Activated T-helper 2 cell treated with anti-CD3 and anti-CD28 coated beads, Interferon-gamma antibody, Interleukin-2, Interleukin-4, amounts not matched to agents 10 μg/mL and 5 μg/mL and 100 μg/mL, durations not matched to agents 14 hours and 24 hours and 36 hours (primary cell): ENCODE measurements at regions of chr11 and their contacts with region 1.

Region 1: GRCh38 chr11:35144136-35144741 is 5.3 kb downstream of the CD44 start:
- DNase-seq: peak; percentile 62
- H3K4me3 Mint-ChIP-seq: peak overlapping the region; percentile 58
- H3K27ac Mint-ChIP-seq: peak overlapping the region; percentile 95
- H3K4me1 Mint-ChIP-seq: peaks cover 69% of the 10 kb centered on the region
- H3K27me3 Mint-ChIP-seq: no peaks in the 10 kb centered on the region

Region 2: GRCh38 chr11:34243726-34244464 is 900.3 kb before region 1 on chr11:
- intact Hi-C with region 1: loop called (anchors 10 kb)
- DNase-seq: peak; percentile 52
- H3K4me3 Mint-ChIP-seq: peak overlapping the region; percentile 45
- H3K27ac Mint-ChIP-seq: peak overlapping the region; percentile 83
- H3K4me1 Mint-ChIP-seq: peaks cover 87% of the 10 kb centered on the region
- H3K27me3 Mint-ChIP-seq: no peaks in the 10 kb centered on the region

Region 3: DNA sequence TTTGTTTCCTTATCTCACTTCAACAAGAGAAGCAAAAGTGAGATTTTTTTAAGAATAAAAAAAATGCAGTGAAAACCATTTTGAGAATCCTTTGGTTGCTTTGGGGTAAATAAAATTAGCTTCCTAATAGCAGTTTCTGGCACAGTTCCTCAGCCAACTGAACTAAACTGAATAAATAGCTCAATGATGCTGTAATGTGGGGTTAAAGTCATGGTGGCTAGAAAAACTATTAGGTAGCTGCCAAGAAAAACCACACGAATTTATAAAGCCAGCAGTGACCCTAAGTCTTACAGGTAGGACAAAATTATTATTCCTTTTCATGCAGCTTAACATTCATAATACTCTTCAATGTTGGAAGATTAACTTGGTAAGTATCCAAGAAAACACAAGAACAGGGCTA is 370.4 kb before region 1 on chr11:
- intact Hi-C with region 1: no loop called
- DNase-seq: no peak
- H3K4me3 Mint-ChIP-seq: no peak overlapping the region
- H3K27ac Mint-ChIP-seq: no peak overlapping the region
- H3K4me1 Mint-ChIP-seq: no peaks in the 10 kb centered on the region
- H3K27me3 Mint-ChIP-seq: peaks cover 11% of the 10 kb centered on the region

Region 4: GRCh38 chr11:34997952-34998528 is 146.2 kb before region 1 on chr11:
- intact Hi-C with region 1: no loop called
- DNase-seq: no peak
- H3K4me3 Mint-ChIP-seq: peak overlapping the region; percentile 10
- H3K27ac Mint-ChIP-seq: no peak overlapping the region
- H3K4me1 Mint-ChIP-seq: peaks cover 22% of the 10 kb centered on the region
- H3K27me3 Mint-ChIP-seq: peaks cover 2% of the 10 kb centered on the region

Region 5: GRCh38 chr11:35040221-35040942 is 103.9 kb before region 1 on chr11:
- intact Hi-C with region 1: loop called (anchors 1 kb)
- DNase-seq: peak; percentile 69
- H3K4me3 Mint-ChIP-seq: peak overlapping the region; percentile 73
- H3K27ac Mint-ChIP-seq: peak overlapping the region; percentile 91
- H3K4me1 Mint-ChIP-seq: peaks cover 58% of the 10 kb centered on the region
- H3K27me3 Mint-ChIP-seq: peaks cover 20% of the 10 kb centered on the region

Region 6: GRCh38 chr11:35126000-35126878 is 18.0 kb before region 1 on chr11:
- intact Hi-C with region 1: loop called (anchors 1 kb)
- DNase-seq: no peak
- H3K4me3 Mint-ChIP-seq: peak overlapping the region; percentile 57
- H3K27ac Mint-ChIP-seq: peak overlapping the region; percentile 79
- H3K4me1 Mint-ChIP-seq: peaks cover 56% of the 10 kb centered on the region
- H3K27me3 Mint-ChIP-seq: peaks cover 7% of the 10 kb centered on the region

Region 7: DNA sequence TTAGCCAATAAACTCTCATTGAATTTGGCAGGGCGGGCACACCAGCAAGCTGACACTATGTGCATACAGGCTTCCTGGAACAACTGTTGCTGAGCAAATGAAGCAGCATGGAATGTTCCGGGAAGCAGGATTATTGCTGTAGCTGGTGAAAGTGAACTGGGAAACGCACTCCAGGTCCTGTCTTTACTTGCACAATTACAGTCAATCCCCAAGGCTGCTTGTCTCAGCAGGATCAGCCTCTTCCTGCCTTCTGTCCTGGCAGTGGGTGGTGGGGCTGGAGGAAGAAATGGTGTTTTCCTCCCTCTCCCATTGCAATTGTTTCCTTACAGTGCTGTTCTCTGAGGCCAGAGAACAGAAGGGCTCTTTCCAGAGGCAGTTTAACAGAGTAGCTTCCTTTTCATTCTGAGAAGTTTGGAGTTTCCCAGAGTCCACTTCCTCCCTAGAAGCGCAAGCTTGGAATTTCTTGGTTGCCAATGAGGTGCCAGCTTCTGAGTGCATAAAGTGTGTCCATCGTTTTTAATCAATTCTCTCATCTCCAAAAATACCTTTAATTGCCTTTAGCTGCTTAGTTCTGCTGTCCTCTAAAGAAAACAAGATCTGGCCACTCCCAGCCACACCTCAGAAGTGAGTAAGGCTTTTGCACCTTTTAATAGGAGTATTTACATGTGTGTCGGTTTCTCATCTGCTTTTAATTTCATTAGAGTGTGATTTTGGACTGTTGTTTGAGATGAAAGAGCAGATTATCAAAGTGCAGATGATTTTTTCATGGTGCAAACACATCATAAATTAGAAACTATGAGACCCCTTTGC is 14.7 kb after region 1 on chr11:
- intact Hi-C with region 1: no loop called
- DNase-seq: no peak
- H3K4me3 Mint-ChIP-seq: no peak overlapping the region
- H3K27ac Mint-ChIP-seq: no peak overlapping the region
- H3K4me1 Mint-ChIP-seq: peaks cover 83% of the 10 kb centered on the region
- H3K27me3 Mint-ChIP-seq: no peaks in the 10 kb centered on the region

Region 8: DNA sequence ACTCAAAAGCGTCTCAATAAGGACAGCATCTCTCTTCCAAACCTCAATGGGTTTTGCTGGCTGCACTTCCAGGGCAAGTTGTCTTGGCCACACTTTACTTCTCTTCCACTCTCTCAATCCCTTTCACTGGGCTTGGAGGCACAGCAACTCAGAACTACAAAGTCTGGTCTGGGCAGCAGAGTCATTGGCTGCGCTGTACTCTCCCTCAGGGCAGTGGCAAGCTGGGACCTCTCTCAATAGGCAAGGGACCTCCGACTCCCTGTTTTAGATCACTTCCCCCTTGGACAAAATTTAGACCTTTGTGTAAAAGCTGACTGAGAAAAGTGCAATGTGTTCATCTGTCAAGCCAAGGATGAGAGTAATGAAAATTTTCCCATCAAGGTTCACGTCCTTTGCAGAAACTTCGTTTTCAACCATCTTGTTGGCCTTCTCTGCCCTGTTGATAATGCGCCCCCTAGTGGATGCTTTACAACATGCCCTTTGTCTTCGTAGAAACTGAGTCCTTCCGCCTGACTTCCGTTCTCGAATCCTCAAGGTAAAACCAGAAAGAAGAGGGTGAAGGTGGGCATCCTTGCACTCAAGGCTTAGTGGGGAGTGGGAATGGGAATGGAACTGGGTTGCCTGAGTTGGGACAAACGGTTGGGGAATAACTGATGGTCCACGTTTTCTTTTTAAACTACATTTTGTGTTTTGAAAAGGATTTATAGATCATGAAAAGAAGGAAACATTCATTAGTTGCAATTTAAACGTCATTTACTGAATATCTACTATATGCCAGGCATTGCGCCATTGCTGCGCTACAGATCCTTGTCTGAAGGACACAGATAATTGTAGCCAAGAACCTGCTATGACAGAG is 93.8 kb after region 1 on chr11:
- intact Hi-C with region 1: loop called (anchors 5 kb)
- DNase-seq: peak; percentile 34
- H3K4me3 Mint-ChIP-seq: no peak overlapping the region
- H3K27ac Mint-ChIP-seq: no peak overlapping the region
- H3K4me1 Mint-ChIP-seq: peaks cover 78% of the 10 kb centered on the region
- H3K27me3 Mint-ChIP-seq: peaks cover 13% of the 10 kb centered on the region

Region 9: GRCh38 chr11:35282226-35282882 is 138.1 kb after region 1 on chr11:
- intact Hi-C with region 1: no loop called
- DNase-seq: no peak
- H3K4me3 Mint-ChIP-seq: no peak overlapping the region
- H3K27ac Mint-ChIP-seq: peak overlapping the region; percentile 40
- H3K4me1 Mint-ChIP-seq: peaks cover 21% of the 10 kb centered on the region
- H3K27me3 Mint-ChIP-seq: no peaks in the 10 kb centered on the region

Region 10: GRCh38 chr11:35391922-35392813 is 247.9 kb after region 1 on chr11:
- intact Hi-C with region 1: loop called (anchors 2 kb)
- DNase-seq: peak; percentile 64
- H3K4me3 Mint-ChIP-seq: no peak overlapping the region
- H3K27ac Mint-ChIP-seq: no peak overlapping the region
- H3K4me1 Mint-ChIP-seq: peaks cover 26% of the 10 kb centered on the region
- H3K27me3 Mint-ChIP-seq: peaks cover 15% of the 10 kb centered on the region